ENCODE measurements at regions of chr17 and their contacts with region 1.

Region 1: GRCh38 chr17:58200017-58200633 is 7.6 kb downstream of the EPX start:
- DNase-seq: peak; percentile 74
- H3K4me3 Mint-ChIP-seq: no peak overlapping the region
- H3K27ac Mint-ChIP-seq: no peak overlapping the region
- H3K4me1 Mint-ChIP-seq: peaks cover 3% of the 10 kb centered on the region
- H3K27me3 Mint-ChIP-seq: peaks cover 10% of the 10 kb centered on the region

Region 2: DNA sequence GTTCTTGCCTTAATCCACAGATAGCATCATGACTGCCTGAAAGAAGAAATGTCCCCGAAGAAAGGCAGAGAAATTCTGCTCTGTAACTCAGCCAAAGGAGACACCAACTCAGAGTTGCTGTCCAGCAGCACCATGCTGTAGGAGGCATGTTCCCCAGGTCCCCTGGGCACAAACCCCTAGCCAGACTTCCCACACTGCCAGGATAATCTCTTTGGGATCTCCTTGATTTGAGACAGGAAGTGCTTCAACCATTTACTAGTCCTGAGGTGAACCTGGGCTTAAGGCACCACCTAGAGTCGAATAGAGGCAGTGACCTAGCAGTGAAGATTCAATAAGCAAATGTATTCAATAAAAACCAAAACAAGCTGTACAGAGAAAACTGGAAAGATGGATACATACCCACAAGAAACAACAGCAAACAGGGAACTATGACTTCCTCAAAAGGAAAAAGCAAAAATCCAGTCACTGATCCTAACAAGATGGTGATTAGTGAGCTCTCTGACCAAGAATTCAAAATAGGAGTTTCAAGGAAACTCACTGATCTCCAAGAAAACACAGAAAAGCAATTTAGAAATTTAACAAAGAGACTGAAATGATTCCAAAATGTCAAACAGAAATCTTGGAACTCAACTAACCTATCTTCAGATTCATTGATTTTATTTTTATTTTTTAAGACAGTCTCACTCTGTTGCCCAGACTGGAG is 27.6 kb before region 1 on chr17:
- CTCF ChIA-PET with region 1: interaction called, 10 read pairs
- POLR2A ChIA-PET with region 1: no interaction called
- intact Hi-C with region 1: no loop called
- DNase-seq: peak; percentile 59
- H3K4me3 Mint-ChIP-seq: no peak overlapping the region
- H3K27ac Mint-ChIP-seq: no peak overlapping the region
- H3K4me1 Mint-ChIP-seq: peaks cover 36% of the 10 kb centered on the region
- H3K27me3 Mint-ChIP-seq: peaks cover 3% of the 10 kb centered on the region

Region 3: GRCh38 chr17:58210922-58211321 is 10.8 kb after region 1 on chr17:
- CTCF ChIA-PET with region 1: interaction called, 23 read pairs
- POLR2A ChIA-PET with region 1: no interaction called
- intact Hi-C with region 1: no loop called
- DNase-seq: no peak
- H3K4me3 Mint-ChIP-seq: no peak overlapping the region
- H3K27ac Mint-ChIP-seq: no peak overlapping the region
- H3K4me1 Mint-ChIP-seq: no peaks in the 10 kb centered on the region
- H3K27me3 Mint-ChIP-seq: no peaks in the 10 kb centered on the region

Region 4: DNA sequence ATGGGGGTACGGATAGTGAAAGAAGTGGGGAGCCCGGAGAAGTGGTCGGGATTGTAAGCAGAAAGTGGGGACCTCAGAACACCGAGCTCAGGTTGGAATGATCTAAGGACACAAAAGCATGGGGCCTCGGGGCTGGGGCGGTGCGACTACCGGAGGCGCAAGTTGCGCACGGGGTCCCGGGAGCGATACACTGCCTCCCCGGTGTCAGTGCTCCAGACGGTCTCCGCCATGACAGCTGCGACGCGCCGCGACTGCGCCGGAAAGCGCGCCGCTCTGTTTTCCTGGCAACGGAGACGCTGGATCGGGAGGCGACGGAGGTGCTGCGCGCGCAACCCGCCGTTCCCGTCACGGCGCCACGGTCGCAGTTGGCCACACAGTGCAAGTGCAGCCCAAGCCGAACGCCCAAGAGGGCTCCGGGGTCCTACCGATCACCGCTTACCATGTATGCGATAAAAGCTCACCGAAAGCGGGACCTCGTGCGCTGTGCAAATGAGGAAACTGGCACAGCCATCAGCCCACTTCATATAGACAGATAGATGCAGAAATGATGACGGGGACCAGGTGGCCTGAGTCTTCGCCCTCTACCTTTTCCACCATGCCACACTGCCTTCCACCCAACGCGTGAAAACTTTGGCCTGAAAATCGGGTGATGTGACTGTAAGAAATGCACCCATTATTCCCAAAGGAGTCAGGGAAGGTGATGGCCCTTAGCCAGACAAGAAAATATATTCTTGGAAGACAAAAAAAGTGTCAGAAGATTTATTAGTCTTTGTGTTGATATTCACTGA is 19.1 kb after region 1 on chr17 and contains the start of gene MKS1:
- CTCF ChIA-PET with region 1: interaction called, 16 read pairs
- POLR2A ChIA-PET with region 1: no interaction called
- intact Hi-C with region 1: no loop called
- DNase-seq: peak; percentile 98
- H3K4me3 Mint-ChIP-seq: peak within 1 kb of the TSS; percentile 95
- H3K27ac Mint-ChIP-seq: peak within 1 kb of the TSS; percentile 93
- H3K4me1 Mint-ChIP-seq: peaks cover 23% of the 10 kb centered on the region
- H3K27me3 Mint-ChIP-seq: no peaks in the 10 kb centered on the region
- total RNA-seq, gene MKS1: 23.5 to 27.3 TPM

Region 5: DNA sequence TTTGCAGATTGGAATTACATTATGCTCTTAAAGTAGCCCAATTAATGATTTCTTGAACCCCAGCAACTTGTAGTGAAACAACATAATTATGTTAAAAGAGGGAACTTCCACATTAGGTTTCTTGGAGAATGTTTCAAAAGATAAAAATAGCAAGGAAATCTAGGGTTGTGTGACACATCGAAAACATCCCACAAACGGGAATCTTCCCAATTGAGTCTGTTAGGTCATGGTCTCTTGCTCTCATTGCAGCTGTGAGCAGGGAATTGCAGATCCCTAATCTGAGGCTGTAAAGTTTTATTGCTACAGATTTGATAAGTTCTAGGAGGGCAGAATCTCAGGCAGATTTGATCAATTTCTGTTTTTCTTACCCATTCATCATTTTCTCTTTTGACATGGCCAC is 31.5 kb after region 1 on chr17:
- CTCF ChIA-PET with region 1: interaction called, 13 read pairs
- POLR2A ChIA-PET with region 1: no interaction called
- intact Hi-C with region 1: no loop called
- DNase-seq: no peak
- H3K4me3 Mint-ChIP-seq: no peak overlapping the region
- H3K27ac Mint-ChIP-seq: no peak overlapping the region
- H3K4me1 Mint-ChIP-seq: peaks cover 7% of the 10 kb centered on the region
- H3K27me3 Mint-ChIP-seq: peaks cover 30% of the 10 kb centered on the region

Region 6: GRCh38 chr17:58249270-58250133 is 49.4 kb after region 1 on chr17:
- CTCF ChIA-PET with region 1: interaction called, 27 read pairs
- POLR2A ChIA-PET with region 1: no interaction called
- intact Hi-C with region 1: no loop called
- DNase-seq: peak; percentile 83
- H3K4me3 Mint-ChIP-seq: peak overlapping the region; percentile 70
- H3K27ac Mint-ChIP-seq: no peak overlapping the region
- H3K4me1 Mint-ChIP-seq: peaks cover 13% of the 10 kb centered on the region
- H3K27me3 Mint-ChIP-seq: peaks cover 18% of the 10 kb centered on the region

Region 7: GRCh38 chr17:58447039-58447975 is 247.2 kb after region 1 on chr17:
- CTCF ChIA-PET with region 1: interaction called, 11 read pairs
- POLR2A ChIA-PET with region 1: no interaction called
- intact Hi-C with region 1: no loop called
- DNase-seq: peak; percentile 83
- H3K4me3 Mint-ChIP-seq: no peak overlapping the region
- H3K27ac Mint-ChIP-seq: no peak overlapping the region
- H3K4me1 Mint-ChIP-seq: peaks cover 9% of the 10 kb centered on the region
- H3K27me3 Mint-ChIP-seq: no peaks in the 10 kb centered on the region